Posterior cingulate gyrus (tissue), 11 donors: ENCODE measurements at regions of chr6 and their contacts with region 1.

Region 1: GRCh38 chr6:23339268-23339667 is 769.9 kb downstream of the HDGFL1 start:
- DNase-seq: no peak

Region 2: GRCh38 chr6:21942897-21943296 is 1396.4 kb before region 1 on chr6:
- intact Hi-C with region 1: loop called (anchors 5 kb)
- DNase-seq: no peak

Region 3: GRCh38 chr6:21984561-21984960 is 1354.7 kb before region 1 on chr6:
- intact Hi-C with region 1: no loop called
- DNase-seq: no peak